BJ (cell line): ENCODE measurements at regions of chr17 and their contacts with region 1.

Region 1: GRCh38 chr17:44044067-44044466 is 22.4 kb downstream of the LSM12 start:
- DNase-seq: no peak
- H3K4me3 ChIP-seq: no peak overlapping the region
- H3K27me3 ChIP-seq: no peaks in the 10 kb centered on the region
- CTCF ChIP-seq: no peak

Region 2: DNA sequence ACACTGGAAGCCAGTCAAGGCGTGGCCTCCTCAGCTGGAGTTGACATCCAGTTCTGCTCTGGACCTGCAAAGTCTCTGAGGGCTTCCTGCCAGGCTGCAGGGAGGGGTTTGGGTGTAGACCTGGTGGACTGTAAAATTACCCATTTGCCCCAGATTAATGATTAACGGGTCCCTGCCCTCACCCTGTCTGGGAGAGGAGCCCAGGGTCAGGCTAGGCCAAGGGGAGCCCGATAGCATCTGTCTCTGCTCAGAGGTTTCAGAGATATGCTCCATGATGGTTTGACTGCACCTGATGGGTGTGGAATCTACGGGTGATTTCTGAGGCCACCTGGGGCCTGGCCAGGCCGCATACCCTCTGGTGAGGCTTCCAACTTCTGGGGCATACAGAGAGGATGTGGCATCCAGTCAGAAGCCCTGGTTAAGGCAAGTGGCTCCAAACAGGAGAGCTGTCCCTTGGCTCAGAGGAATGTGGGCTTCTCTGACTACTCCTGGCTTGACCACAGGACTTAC is 113.0 kb before region 1 on chr17:
- CTCF ChIA-PET with region 1: no interaction called
- POLR2A ChIA-PET with region 1: no interaction called
- DNase-seq: no peak
- H3K4me3 ChIP-seq: no peak overlapping the region
- H3K27me3 ChIP-seq: peaks cover 19% of the 10 kb centered on the region
- CTCF ChIP-seq: no peak

Region 3: GRCh38 chr17:44061446-44061845 is 17.4 kb after region 1 on chr17:
- CTCF ChIA-PET with region 1: interaction called, 9 read pairs
- POLR2A ChIA-PET with region 1: interaction called, 18 read pairs
- DNase-seq: peak; percentile 65
- H3K4me3 ChIP-seq: no peak overlapping the region
- H3K27me3 ChIP-seq: no peaks in the 10 kb centered on the region
- CTCF ChIP-seq: no peak

Region 4: GRCh38 chr17:44308320-44308818 is 264.3 kb after region 1 on chr17 and contains the start of gene RUNDC3A:
- CTCF ChIA-PET with region 1: no interaction called
- POLR2A ChIA-PET with region 1: no interaction called
- DNase-seq: no peak
- H3K4me3 ChIP-seq: peak within 1 kb of the TSS; percentile 48
- H3K27me3 ChIP-seq: peaks cover 9% of the 10 kb centered on the region
- CTCF ChIP-seq: no peak
- polyA plus RNA-seq, gene RUNDC3A: 0.31 and 0.58 TPM in 2 replicates